ENCODE measurements at regions of chr18 and their contacts with region 1.

Region 1: GRCh38 chr18:1133541-1133940 is 228.9 kb downstream of the ADCYAP1 start:
- DNase-seq: no peak
- ATAC-seq: no peak
- H3K4me3 Mint-ChIP-seq: no peak overlapping the region
- H3K27ac Mint-ChIP-seq: no peak overlapping the region
- H3K4me1 Mint-ChIP-seq: no peaks in the 10 kb centered on the region
- H3K27me3 Mint-ChIP-seq: no peaks in the 10 kb centered on the region

Region 2: DNA sequence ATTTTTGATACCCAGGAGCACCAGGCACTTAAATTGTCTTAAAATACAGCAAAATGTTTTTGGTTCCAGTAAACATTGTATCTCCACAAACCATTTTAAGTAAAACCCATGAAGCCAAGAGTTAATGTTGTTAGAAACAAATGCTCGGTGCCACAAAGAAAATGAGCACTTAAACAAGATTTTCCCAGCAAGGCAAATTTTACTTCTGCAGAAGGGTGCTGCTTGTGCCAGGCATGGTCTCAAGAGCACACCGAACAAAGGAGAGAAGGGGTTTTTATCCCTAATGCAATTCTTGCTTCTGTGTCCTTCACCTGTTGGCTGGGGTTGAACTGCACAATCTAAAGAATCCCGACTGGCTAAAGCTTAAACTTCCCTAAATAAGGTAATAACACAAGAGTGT is 57.8 kb after region 1 on chr18:
- CTCF ChIA-PET with region 1: no interaction called
- POLR2A ChIA-PET with region 1: no interaction called
- intact Hi-C with region 1: loop called in 1 of 2 experiments (anchors 10 kb)
- DNase-seq: no peak
- ATAC-seq: no peak
- H3K4me3 Mint-ChIP-seq: no peak overlapping the region
- H3K27ac Mint-ChIP-seq: no peak overlapping the region
- H3K4me1 Mint-ChIP-seq: no peaks in the 10 kb centered on the region
- H3K27me3 Mint-ChIP-seq: no peaks in the 10 kb centered on the region

Region 3: GRCh38 chr18:1392046-1392445 is 258.5 kb after region 1 on chr18:
- CTCF ChIA-PET with region 1: no interaction called
- POLR2A ChIA-PET with region 1: no interaction called
- intact Hi-C with region 1: loop called in 1 of 2 experiments (anchors 10 kb)
- DNase-seq: no peak
- ATAC-seq: no peak
- H3K4me3 Mint-ChIP-seq: no peak overlapping the region
- H3K27ac Mint-ChIP-seq: no peak overlapping the region
- H3K4me1 Mint-ChIP-seq: no peaks in the 10 kb centered on the region
- H3K27me3 Mint-ChIP-seq: peaks cover 2% of the 10 kb centered on the region

Measured in activated CD4-positive, alpha-beta T cell treated with anti-CD3 and anti-CD28 coated beads for 36 hours (primary cell).